Right ventricle myocardium superior (tissue), 1 donor: ENCODE measurements at regions of chr5 and their contacts with region 1.

Region 1: DNA sequence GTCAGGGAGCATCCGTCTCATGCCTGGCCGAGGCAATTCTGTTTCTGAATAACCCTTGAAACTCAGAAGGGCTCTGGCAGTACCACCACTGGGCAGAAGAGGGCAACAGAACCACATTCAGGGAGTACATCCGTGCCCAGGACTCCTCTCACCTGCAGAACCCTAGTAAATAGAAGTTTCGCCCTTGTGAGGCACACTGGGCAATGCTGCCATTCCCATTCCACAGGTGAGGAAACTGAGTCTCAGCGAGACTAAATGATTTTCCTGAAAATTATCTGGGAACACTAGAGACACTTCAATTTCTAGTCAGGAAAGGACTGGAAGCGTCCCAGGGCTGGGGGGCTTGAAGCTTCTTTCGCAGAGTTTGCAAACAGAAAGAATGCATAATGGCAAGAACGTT is 74.7 kb downstream of the FGF1 start:
- DNase-seq: peak; percentile 80
- ATAC-seq: peak; percentile 88

Region 2: DNA sequence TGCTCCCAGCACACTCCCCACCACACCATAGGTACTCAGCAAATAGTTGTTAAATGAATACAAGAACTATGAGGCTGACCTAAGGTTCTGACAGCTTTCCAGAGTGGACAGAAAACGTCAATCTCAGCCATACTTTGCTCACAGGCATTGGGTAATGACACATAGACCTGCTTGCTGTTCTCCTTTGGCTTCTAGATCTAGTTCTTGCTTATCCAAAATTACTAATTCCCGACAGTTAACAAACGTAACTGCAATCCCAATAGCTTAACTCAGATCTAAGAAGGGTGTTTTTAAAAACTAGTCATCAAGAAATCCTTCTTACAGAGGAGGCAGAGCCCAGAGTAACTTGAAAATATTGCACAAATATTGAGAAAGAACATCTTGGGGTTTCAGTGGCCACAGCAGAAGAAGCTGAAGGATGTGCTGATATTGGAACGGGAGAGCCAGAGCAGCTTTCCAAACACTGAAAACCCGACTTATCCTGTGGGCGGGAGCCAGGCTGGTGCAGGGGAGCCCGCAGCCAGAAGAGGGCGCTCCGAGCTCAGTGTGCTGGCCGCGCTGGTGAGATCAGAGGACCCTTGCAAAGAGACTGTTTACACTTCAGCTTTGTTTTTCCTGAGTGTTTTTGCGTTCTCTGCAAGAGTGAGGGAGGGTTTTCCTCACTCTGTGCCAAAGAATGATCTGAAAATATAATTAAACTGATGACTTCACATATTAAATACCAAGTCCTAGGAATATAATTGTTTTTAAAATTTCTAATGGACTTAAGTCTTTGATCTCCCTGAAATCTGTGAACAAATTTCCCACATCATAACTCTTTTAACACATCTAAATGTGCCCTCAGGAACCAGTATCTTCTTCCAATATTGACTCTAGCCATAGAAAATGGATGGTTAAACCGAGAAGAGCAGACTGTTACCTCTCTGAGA is 44.4 kb after region 1 on chr5:
- intact Hi-C with region 1: loop called (anchors 5 kb)
- DNase-seq: peak; percentile 93
- ATAC-seq: peak; percentile 96

Region 3: DNA sequence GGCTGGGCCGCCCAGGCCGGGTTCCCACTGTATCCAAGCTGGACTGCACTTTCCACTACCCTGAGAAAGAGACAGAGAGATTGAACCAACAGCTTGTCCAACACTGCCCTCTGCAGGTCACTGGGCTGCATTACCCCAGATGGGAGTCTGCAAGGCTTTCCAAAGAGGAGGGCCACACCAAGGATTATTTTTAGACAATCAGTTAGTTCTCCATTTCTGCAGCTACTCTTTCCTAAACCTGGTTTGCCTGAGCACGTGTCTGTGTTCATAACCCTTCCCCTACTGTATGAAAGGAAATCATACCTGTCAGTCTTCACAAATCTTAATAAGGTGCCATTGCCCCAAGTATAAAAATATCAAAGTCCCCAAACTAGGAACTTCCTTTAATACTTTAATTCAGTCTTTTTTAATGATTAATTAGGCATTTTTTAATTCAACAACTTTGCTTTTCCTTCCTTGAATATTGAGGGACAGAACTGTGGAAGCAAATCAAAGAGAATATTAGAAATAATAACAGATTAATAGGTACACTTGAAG is 88.1 kb after region 1 on chr5:
- intact Hi-C with region 1: loop called (anchors 5 kb)
- DNase-seq: peak; percentile 92
- ATAC-seq: peak; percentile 90

Region 4: DNA sequence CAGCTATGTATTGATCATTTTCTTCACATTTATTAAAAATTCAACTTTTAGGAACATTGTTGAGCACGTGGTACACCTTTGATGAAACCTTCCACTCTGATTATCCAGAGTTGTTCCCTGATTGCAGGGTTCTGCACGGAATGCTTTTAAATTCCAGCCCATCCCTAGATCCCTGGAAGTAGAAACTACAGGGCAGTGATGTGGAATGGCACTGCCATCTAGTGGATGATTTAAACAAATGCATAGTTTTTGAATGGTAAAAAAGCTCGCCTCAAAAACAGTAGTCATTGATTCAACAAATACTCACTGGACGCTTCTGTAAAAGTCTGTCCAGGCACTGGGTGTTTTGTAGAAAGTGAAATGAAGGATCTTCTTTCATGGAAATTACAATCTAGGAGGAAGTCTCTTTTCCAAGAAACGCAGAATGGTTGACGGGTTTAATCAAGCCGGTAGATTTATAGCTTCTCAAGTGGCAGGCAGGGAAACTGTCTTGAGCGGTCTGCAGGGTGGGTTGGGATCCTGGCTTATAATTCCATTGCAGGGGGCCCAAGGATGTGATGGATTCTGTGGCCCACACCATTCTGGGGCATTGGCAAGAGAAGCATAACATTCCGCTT is 277.4 kb after region 1 on chr5:
- intact Hi-C with region 1: loop called (anchors 5 kb)
- DNase-seq: no peak
- ATAC-seq: peak; percentile 62

Region 5: GRCh38 chr5:142900927-142901326 is 289.8 kb after region 1 on chr5:
- intact Hi-C with region 1: no loop called
- DNase-seq: no peak
- ATAC-seq: no peak